PC-3 (cell line): ENCODE measurements at regions of chr2 and their contacts with region 1.

Region 1: GRCh38 chr2:111897924-111898702 is at the start of gene MERTK:
- DNase-seq: peak; percentile 73
- ATAC-seq: peak; percentile 82
- H3K4me3 ChIP-seq: peak within 1 kb of the TSS; percentile 81
- H3K27ac ChIP-seq: no peak within 1 kb of the TSS
- H3K4me1 ChIP-seq: peaks cover 12% of the 10 kb centered on the region
- H3K27me3 ChIP-seq: peaks cover 5% of the 10 kb centered on the region; the same call in 1 of the 2 replicates
- CTCF ChIP-seq: peak; percentile 74
- total RNA-seq, gene MERTK: 2.5 and 3.9 TPM in 2 replicates

Region 2: GRCh38 chr2:111908578-111908977 is 10.5 kb after region 1 on chr2:
- CTCF ChIA-PET with region 1: no interaction called
- POLR2A ChIA-PET with region 1: interaction called, 16 read pairs
- intact Hi-C with region 1: no loop called
- DNase-seq: no peak
- ATAC-seq: no peak
- H3K4me3 ChIP-seq: no peak overlapping the region
- H3K27ac ChIP-seq: no peak overlapping the region
- H3K4me1 ChIP-seq: peaks cover 7% of the 10 kb centered on the region
- H3K27me3 ChIP-seq: no peaks in the 10 kb centered on the region
- CTCF ChIP-seq: no peak

Region 3: DNA sequence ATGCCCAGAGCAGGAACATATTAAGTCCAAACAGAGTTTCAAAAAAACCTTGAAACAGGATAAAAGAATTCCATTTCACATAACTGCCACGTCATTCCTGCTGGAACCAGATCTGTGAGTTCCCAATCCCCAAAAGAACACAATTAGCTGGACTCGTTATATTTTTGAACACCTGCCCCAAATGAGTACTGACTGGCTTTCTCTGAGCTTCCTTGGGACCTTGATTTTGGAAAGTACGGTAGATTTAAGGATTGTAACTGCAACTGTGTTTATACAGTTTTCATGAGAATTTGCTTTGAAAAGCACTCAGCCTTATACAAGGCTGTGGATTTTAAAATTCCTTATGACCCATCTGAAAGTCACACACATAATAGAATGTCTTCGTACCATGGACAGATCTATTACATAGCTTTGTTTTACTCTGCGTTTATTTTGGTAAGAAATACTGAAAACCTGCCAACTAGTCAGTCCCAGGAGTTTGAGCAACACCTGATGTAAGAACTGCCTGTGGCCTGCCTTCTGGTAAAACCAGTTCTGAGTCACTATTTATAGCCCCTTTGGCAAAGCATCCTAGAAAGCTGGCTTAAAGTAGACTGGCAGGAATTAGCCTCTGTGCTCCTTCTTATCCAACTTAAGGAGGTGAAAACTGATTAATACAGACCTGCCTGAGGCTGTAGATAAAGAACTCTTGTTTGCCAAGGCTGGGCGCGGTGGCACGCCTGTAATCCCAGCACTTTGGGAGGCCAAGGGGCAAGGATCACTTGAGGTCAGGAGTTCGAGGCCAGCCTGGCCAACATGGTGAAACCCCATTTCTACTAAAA is 48.4 kb after region 1 on chr2:
- CTCF ChIA-PET with region 1: interaction called, 5 read pairs
- POLR2A ChIA-PET with region 1: no interaction called
- intact Hi-C with region 1: loop called (anchors 1 kb)
- DNase-seq: peak; percentile 99
- ATAC-seq: peak; percentile 96
- H3K4me3 ChIP-seq: peak overlapping the region; percentile 15; the same call in 1 of the 2 replicates
- H3K27ac ChIP-seq: peak overlapping the region; percentile 74
- H3K4me1 ChIP-seq: peaks cover 22% of the 10 kb centered on the region
- H3K27me3 ChIP-seq: no peaks in the 10 kb centered on the region
- CTCF ChIP-seq: no peak

Region 4: DNA sequence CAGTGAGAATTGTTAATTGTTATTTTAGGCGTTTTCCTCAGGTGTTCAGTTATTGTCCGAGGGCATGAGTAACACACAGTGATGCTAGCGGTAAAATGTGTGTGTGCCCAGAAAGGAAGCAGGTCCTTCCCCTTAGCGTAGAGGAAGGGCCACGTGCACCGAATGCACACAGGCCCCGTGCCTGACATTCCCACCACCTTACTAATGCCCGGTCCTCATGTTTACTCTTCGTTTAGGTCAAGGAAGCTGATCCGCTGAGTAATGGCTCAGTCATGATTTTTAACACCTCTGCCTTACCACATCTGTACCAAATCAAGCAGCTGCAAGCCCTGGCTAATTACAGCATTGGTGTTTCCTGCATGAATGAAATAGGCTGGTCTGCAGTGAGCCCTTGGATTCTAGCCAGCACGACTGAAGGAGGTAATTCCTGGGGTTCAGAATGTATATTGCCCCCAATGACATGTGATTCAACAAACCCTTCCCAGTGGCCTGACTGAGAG is 77.0 kb after region 1 on chr2:
- CTCF ChIA-PET with region 1: no interaction called
- POLR2A ChIA-PET with region 1: no interaction called
- intact Hi-C with region 1: loop called (anchors 10 kb)
- DNase-seq: peak; percentile 97
- ATAC-seq: peak; percentile 100
- H3K4me3 ChIP-seq: no peak overlapping the region
- H3K27ac ChIP-seq: no peak overlapping the region
- H3K4me1 ChIP-seq: peaks cover 33% of the 10 kb centered on the region
- H3K27me3 ChIP-seq: no peaks in the 10 kb centered on the region
- CTCF ChIP-seq: no peak

Region 5: DNA sequence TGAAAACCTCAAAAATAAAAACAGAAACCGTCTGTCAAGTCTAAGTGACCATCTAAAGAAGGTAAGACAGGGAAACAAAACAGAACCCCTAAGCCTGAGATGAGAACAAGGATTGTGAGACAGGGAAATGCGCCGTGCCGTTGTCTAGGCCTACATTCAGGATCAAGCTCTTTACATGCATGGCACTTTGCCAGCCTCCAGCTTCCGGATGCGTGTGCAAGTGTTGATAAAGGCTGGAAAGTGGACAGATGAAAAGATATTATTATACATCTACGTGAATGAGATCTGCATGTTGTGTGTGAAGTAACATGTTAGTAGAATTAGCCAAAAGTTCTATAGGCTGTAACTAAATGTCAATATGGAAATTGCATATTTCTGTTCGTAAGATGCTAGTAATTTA is 128.4 kb after region 1 on chr2:
- CTCF ChIA-PET with region 1: no interaction called
- POLR2A ChIA-PET with region 1: no interaction called
- intact Hi-C with region 1: loop called (anchors 5 kb)
- DNase-seq: no peak
- ATAC-seq: no peak
- H3K4me3 ChIP-seq: no peak overlapping the region
- H3K27ac ChIP-seq: no peak overlapping the region
- H3K4me1 ChIP-seq: peaks cover 23% of the 10 kb centered on the region
- H3K27me3 ChIP-seq: no peaks in the 10 kb centered on the region
- CTCF ChIP-seq: no peak

Region 6: GRCh38 chr2:112048887-112049286 is 150.8 kb after region 1 on chr2:
- CTCF ChIA-PET with region 1: interaction called, 10 read pairs
- POLR2A ChIA-PET with region 1: no interaction called
- intact Hi-C with region 1: loop called (anchors 1 kb)
- DNase-seq: peak; percentile 86
- ATAC-seq: peak; percentile 64
- H3K4me3 ChIP-seq: no peak overlapping the region
- H3K27ac ChIP-seq: no peak overlapping the region
- H3K4me1 ChIP-seq: peaks cover 6% of the 10 kb centered on the region
- H3K27me3 ChIP-seq: no peaks in the 10 kb centered on the region
- CTCF ChIP-seq: peak; percentile 72